Calu3 (cell line): ENCODE measurements at regions of chr9 and their contacts with region 1.

Region 1: DNA sequence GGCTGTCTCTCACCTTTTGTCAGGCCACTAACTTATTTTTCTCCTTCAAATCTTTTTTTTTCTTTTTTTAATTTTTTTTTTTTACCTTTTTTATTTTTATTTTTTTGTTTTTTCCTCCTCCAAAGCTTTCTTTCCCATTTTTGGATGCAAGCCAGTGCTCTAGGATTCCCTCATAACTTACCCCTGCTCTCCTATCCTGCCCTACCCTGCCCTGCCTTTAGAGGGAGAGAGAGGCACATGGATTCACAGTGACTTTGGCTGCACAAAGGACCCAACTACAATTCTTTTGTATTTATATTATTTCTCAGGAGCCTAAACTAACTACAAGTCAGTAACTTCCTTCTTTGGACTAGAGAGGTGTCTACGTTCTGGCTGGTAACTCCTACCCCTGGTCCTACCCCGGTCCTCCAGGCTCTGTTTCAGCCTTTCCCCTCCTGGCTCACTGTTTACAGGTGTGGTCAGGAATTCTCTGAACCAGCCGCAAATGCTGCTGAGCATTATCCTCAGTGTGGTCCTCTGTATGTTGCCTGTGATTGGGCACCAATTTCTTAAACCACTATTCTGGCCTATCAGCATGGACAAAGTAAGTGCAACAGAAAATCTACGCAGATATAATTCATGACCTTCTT is 8.4 kb upstream of the RUSC2 start:
- DNase-seq: peak; percentile 64
- H3K4me3 Mint-ChIP-seq: no peak overlapping the region
- H3K27ac Mint-ChIP-seq: no peak overlapping the region
- H3K4me1 Mint-ChIP-seq: peaks cover 9% of the 10 kb centered on the region
- H3K27me3 Mint-ChIP-seq: no peaks in the 10 kb centered on the region
- CTCF ChIP-seq: peak; percentile 49

Region 2: DNA sequence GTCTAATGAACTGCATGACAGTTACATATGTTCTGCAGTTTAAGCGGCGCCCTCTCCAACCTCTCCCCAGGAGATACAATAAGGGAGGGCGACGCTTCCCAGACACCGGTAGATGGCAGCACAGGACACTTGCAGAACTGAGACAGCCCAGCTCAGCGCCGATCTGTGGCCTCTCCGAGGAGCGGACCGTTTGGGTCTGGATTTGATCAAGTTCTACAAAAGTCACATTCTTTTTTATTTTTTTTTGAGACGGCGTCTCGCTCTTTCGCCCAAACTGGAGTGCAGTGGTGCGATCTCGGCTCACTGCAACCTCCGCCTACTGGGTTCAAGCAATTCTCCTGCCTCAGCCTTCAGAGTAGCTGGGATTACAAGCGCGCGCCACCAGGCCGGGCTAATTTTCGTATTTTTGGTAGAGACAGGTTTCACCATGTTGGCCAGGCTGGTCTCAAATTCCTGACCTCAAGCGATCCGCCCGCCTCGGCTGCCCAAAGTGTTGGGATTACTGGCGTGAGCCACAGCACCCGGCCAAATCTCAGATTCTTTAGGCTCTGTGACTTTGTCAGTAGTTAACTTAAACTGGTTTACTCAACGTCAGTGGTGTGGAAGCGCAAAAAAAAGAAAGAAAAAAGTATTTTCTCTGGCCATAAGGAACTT is 364.4 kb before region 1 on chr9:
- CTCF ChIA-PET with region 1: interaction called, 4 read pairs
- intact Hi-C with region 1: loop called (anchors 1 kb)
- DNase-seq: peak; percentile 85
- H3K4me3 Mint-ChIP-seq: peak overlapping the region; percentile 89
- H3K27ac Mint-ChIP-seq: peak overlapping the region; percentile 61
- H3K4me1 Mint-ChIP-seq: peaks cover 26% of the 10 kb centered on the region
- H3K27me3 Mint-ChIP-seq: no peaks in the 10 kb centered on the region
- CTCF ChIP-seq: peak; percentile 70

Region 3: GRCh38 chr9:35258676-35259474 is 222.6 kb before region 1 on chr9:
- CTCF ChIA-PET with region 1: no interaction called
- intact Hi-C with region 1: loop called (anchors 2 kb)
- DNase-seq: peak; percentile 60
- H3K4me3 Mint-ChIP-seq: no peak overlapping the region
- H3K27ac Mint-ChIP-seq: no peak overlapping the region
- H3K4me1 Mint-ChIP-seq: peaks cover 27% of the 10 kb centered on the region
- H3K27me3 Mint-ChIP-seq: no peaks in the 10 kb centered on the region
- CTCF ChIP-seq: peak; percentile 28

Region 4: GRCh38 chr9:35367451-35367850 is 114.0 kb before region 1 on chr9:
- CTCF ChIA-PET with region 1: no interaction called
- intact Hi-C with region 1: no loop called
- DNase-seq: peak; percentile 1
- H3K4me3 Mint-ChIP-seq: no peak overlapping the region
- H3K27ac Mint-ChIP-seq: peak overlapping the region; percentile 24
- H3K4me1 Mint-ChIP-seq: peaks cover 13% of the 10 kb centered on the region
- H3K27me3 Mint-ChIP-seq: no peaks in the 10 kb centered on the region
- CTCF ChIP-seq: no peak

Region 5: DNA sequence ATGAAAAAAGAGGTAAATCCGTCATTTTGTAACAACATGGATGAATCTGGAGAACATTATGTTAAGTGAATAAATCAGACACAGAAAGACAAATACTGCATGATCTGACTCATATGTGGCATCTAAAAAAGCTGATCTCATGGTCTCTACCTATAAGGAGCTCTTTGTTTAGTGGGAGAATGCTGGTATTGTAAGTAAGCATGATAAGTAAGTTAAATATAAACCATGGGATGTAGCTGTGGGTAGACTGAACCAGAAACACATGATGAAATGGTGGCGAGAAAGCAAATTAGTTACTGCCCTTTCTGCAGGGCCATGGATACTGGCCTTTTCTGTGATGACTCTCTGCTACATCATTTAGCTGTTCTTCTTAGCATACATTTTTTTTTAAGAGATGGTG is 58.0 kb before region 1 on chr9:
- CTCF ChIA-PET with region 1: no interaction called
- intact Hi-C with region 1: loop called (anchors 2 kb)
- DNase-seq: peak; percentile 7
- H3K4me3 Mint-ChIP-seq: peak overlapping the region; percentile 10
- H3K27ac Mint-ChIP-seq: peak overlapping the region; percentile 95
- H3K4me1 Mint-ChIP-seq: peaks cover 45% of the 10 kb centered on the region
- H3K27me3 Mint-ChIP-seq: no peaks in the 10 kb centered on the region
- CTCF ChIP-seq: no peak

Region 6: GRCh38 chr9:35553670-35554543 is 72.4 kb after region 1 on chr9:
- CTCF ChIA-PET with region 1: interaction called, 5 read pairs
- intact Hi-C with region 1: loop called (anchors 1 kb)
- DNase-seq: peak; percentile 58
- H3K4me3 Mint-ChIP-seq: no peak overlapping the region
- H3K27ac Mint-ChIP-seq: no peak overlapping the region
- H3K4me1 Mint-ChIP-seq: no peaks in the 10 kb centered on the region
- H3K27me3 Mint-ChIP-seq: no peaks in the 10 kb centered on the region
- CTCF ChIP-seq: peak; percentile 58

Region 7: DNA sequence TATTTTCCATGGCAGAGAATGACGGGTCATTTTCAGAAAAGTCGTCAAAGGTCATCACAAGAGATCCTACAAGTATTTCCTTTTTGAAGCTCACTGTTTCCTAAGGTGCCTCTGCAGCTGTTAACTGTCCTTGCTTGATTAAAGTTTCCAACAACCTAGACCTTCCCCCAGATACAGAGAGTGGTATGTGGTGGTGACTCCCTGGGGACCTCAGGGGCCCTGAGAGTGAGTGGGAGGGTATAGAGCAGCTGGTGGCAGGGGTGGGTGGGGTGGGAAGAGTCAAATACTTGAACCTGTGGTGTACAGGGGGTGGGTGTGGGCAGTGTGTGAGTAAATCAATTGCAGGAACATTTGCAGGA is 138.3 kb after region 1 on chr9:
- CTCF ChIA-PET with region 1: no interaction called
- intact Hi-C with region 1: no loop called
- DNase-seq: no peak
- H3K4me3 Mint-ChIP-seq: no peak overlapping the region
- H3K27ac Mint-ChIP-seq: no peak overlapping the region
- H3K4me1 Mint-ChIP-seq: no peaks in the 10 kb centered on the region
- H3K27me3 Mint-ChIP-seq: peaks cover 55% of the 10 kb centered on the region
- CTCF ChIP-seq: no peak

Region 8: DNA sequence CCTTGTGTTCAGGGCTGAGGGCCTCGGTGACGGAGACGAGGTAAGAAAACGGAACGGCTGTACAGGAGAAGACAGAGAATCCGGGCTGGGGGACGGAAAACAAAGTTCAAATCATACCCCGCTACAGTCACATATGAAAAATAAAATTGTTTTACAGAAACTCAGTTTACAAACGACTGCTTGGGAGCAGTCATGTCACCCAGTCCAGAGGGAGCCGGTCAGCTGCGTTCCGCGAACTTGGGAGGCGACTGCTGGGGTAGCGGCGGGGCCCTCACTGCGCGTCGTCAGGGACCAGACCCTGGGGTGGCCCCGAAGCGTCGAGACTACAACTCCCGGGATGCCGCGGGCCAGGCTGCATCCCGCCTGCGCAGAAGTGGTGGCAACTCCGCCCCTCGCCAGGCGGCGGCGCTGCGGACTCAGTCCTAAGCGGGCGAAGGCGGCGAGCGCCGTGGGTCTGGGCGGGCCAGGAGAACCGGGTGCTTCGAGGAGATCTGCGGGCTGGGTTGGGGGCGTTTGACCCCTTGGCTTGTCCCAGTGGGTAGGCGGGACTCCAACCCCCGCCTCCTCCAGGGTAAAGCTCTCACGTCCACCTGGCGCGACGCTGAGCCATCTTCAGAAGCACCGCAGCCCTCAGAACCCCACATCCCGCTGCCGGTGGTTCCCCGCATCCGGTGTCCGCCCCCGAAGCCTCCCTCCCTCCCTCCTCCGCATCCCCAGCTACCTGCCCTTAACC is 165.2 kb after region 1 on chr9:
- CTCF ChIA-PET with region 1: no interaction called
- intact Hi-C with region 1: no loop called
- DNase-seq: peak; percentile 89
- H3K4me3 Mint-ChIP-seq: peak overlapping the region; percentile 84
- H3K27ac Mint-ChIP-seq: peak overlapping the region; percentile 89
- H3K4me1 Mint-ChIP-seq: peaks cover 12% of the 10 kb centered on the region
- H3K27me3 Mint-ChIP-seq: peaks cover 22% of the 10 kb centered on the region
- CTCF ChIP-seq: peak; percentile 70